IMR-90 (cell line): ENCODE measurements at regions of chr13 and their contacts with region 1.

Region 1: GRCh38 chr13:36666477-36667229 is 7.2 kb upstream of the SERTM1 start:
- DNase-seq: no peak
- ATAC-seq: no peak
- H3K4me3 ChIP-seq: no peak overlapping the region
- H3K27ac ChIP-seq: no peak overlapping the region
- H3K4me1 ChIP-seq: no peaks in the 10 kb centered on the region
- H3K27me3 ChIP-seq: no peaks in the 10 kb centered on the region
- CTCF ChIP-seq: no peak
- POLR2A ChIP-seq: no peak
- RAD21 ChIP-seq: no peak

Region 2: GRCh38 chr13:36395280-36395679 is 271.4 kb before region 1 on chr13:
- CTCF ChIA-PET with region 1: no interaction called
- POLR2A ChIA-PET with region 1: no interaction called
- dilution Hi-C with region 1: no loop called
- in situ Hi-C with region 1: no loop called
- intact Hi-C with region 1: no loop called
- DNase-seq: peak; percentile 66
- ATAC-seq: peak; percentile 93
- H3K4me3 ChIP-seq: no peak overlapping the region
- H3K27ac ChIP-seq: no peak overlapping the region
- H3K4me1 ChIP-seq: no peaks in the 10 kb centered on the region
- H3K27me3 ChIP-seq: peaks cover 2% of the 10 kb centered on the region; the same call in 1 of the 2 replicates
- CTCF ChIP-seq: peak; percentile 71
- POLR2A ChIP-seq: no peak
- RAD21 ChIP-seq: peak; percentile 60

Region 3: DNA sequence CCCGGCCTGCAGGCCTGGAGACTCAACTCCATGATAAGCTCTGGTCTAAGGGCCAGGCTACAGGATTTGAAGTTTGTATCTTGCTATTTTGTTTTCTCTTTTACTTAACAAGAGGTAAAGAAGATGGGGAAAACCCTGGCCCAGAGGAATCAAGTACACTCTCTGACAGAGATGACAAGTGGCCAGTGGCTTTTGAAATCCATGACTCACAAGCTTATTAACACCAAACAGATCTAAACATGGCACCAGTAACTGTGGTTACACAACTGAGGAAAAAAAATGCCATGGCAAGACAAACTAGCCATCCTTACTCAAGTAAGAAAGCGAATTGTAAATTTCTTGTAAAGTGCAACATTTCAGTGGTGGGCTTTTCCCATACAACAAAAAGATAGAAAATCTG is 65.5 kb before region 1 on chr13:
- CTCF ChIA-PET with region 1: no interaction called
- POLR2A ChIA-PET with region 1: no interaction called
- dilution Hi-C with region 1: no loop called
- in situ Hi-C with region 1: loop called (anchors 10 kb)
- intact Hi-C with region 1: no loop called
- DNase-seq: no peak
- ATAC-seq: no peak
- H3K4me3 ChIP-seq: no peak overlapping the region
- H3K27ac ChIP-seq: no peak overlapping the region
- H3K4me1 ChIP-seq: no peaks in the 10 kb centered on the region
- H3K27me3 ChIP-seq: no peaks in the 10 kb centered on the region
- CTCF ChIP-seq: no peak
- POLR2A ChIP-seq: no peak
- RAD21 ChIP-seq: no peak

Region 4: GRCh38 chr13:36973621-36974295 is 307.1 kb after region 1 on chr13:
- CTCF ChIA-PET with region 1: no interaction called
- POLR2A ChIA-PET with region 1: no interaction called
- dilution Hi-C with region 1: no loop called
- in situ Hi-C with region 1: no loop called
- intact Hi-C with region 1: no loop called
- DNase-seq: no peak
- ATAC-seq: no peak
- H3K4me3 ChIP-seq: no peak overlapping the region
- H3K27ac ChIP-seq: no peak overlapping the region
- H3K4me1 ChIP-seq: peaks cover under 1% of the 10 kb centered on the region; the same call in 1 of the 2 replicates
- H3K27me3 ChIP-seq: no peaks in the 10 kb centered on the region
- CTCF ChIP-seq: no peak
- POLR2A ChIP-seq: no peak
- RAD21 ChIP-seq: no peak

Region 5: DNA sequence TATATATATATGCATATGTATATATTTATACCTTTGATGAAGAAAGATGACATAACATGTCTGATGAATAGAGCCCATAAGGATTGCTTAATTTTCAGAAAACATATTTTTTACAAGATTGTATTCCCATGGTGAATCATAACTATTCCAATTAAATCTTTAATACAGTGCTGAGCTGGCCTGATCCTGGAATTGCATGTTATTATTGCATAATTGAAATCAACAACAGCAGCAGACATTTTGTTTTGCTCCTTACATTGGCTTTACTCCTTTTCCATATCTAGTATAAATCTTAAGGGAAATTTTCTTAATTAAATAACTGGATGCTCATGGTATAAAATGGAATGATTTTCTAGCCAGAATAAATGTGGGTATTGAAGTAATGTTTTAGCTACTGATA is 909.9 kb after region 1 on chr13:
- CTCF ChIA-PET with region 1: no interaction called
- POLR2A ChIA-PET with region 1: no interaction called
- dilution Hi-C with region 1: no loop called
- in situ Hi-C with region 1: no loop called
- intact Hi-C with region 1: no loop called
- DNase-seq: no peak
- ATAC-seq: no peak
- H3K4me3 ChIP-seq: no peak overlapping the region
- H3K27ac ChIP-seq: no peak overlapping the region
- H3K4me1 ChIP-seq: no peaks in the 10 kb centered on the region
- H3K27me3 ChIP-seq: no peaks in the 10 kb centered on the region
- CTCF ChIP-seq: no peak
- POLR2A ChIP-seq: no peak
- RAD21 ChIP-seq: no peak